ENCODE measurements at regions of chr2 and their contacts with region 1.

Region 1: GRCh38 chr2:176454893-176455811 is 185.9 kb downstream of the MTX2 start:
- DNase-seq: no peak
- ATAC-seq: peak; percentile 93
- H3K4me3 ChIP-seq: no peak overlapping the region
- H3K27ac ChIP-seq: no peak overlapping the region
- H3K4me1 ChIP-seq: no peaks in the 10 kb centered on the region
- H3K27me3 ChIP-seq: no peaks in the 10 kb centered on the region
- CTCF ChIP-seq: peak; percentile 75 to 84 (median 80)
- EP300 ChIP-seq: no peak; a peak in 1 of 4 replicates
- POLR2A ChIP-seq: no peak
- RAD21 ChIP-seq: peak; percentile 75

Region 2: DNA sequence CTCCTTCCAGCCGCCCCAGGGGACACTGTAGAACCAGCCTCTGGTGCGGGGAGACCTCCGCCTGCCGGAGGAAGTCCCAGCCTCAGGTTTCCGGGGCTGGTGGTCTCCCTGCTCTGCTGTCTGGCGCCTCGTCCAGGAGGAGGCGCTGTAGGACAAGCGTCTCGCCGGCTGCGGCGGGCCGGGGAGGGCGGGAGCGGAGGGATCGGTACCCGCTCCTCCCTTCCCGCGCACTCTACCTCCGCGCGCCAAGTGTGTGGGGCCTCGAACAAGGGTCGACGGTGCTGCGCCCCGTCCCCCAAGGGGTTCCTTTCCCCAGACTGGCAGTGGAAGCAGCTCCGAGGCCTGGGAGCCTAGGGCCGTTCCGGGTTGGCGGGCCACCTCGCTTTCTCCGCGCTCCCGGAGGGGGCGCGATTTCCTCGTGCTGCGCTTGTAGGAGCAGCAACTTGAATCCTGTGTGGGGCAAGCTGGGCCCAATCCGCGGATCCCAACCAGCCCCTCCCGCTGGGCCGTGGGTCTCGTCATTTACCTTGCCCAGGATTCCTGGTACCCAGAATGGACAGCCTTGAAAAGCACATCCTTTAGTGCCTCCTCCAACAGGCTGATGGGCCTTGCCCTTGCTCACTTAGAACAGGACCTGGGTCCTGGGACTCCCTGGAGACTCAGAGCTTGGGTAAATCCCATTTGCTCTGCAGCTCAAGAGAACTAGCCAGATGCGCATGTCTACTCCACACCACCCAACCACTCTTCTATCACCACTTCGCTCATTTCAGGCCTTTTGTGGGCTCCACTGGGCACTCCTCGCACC is 314.4 kb before region 1 on chr2:
- CTCF ChIA-PET with region 1: interaction called, 157 read pairs
- POLR2A ChIA-PET with region 1: no interaction called
- RAD21 ChIA-PET with region 1: interaction called, 76 read pairs
- SMC1A ChIA-PET with region 1: interaction called, 47 read pairs
- in situ Hi-C with region 1: loop called (anchors 5 kb)
- intact Hi-C with region 1: loop called (anchors 1 kb)
- DNase-seq: peak; percentile 24
- ATAC-seq: peak; percentile 99
- H3K4me3 ChIP-seq: peak overlapping the region; percentile 37; the same call in 1 of the 2 replicates
- H3K27ac ChIP-seq: no peak overlapping the region
- H3K4me1 ChIP-seq: no peaks in the 10 kb centered on the region
- H3K27me3 ChIP-seq: peaks cover 0 to 11% of the 10 kb centered on the region in 2 experiments
- CTCF ChIP-seq: peak; percentile 75 to 93 (median 92)
- EP300 ChIP-seq: no peak
- POLR2A ChIP-seq: no peak; the same call in 1 of the 2 replicates
- RAD21 ChIP-seq: peak; percentile 95

Region 3: GRCh38 chr2:176473177-176473576 is 18.0 kb after region 1 on chr2:
- CTCF ChIA-PET with region 1: interaction called, 29 read pairs
- POLR2A ChIA-PET with region 1: interaction called, 3 read pairs
- RAD21 ChIA-PET with region 1: interaction called, 8 read pairs
- SMC1A ChIA-PET with region 1: interaction called, 12 read pairs
- in situ Hi-C with region 1: no loop called
- intact Hi-C with region 1: no loop called
- DNase-seq: no peak
- ATAC-seq: peak; percentile 90
- H3K4me3 ChIP-seq: no peak overlapping the region
- H3K27ac ChIP-seq: no peak overlapping the region
- H3K4me1 ChIP-seq: no peaks in the 10 kb centered on the region; the same call in 1 of the 2 replicates
- H3K27me3 ChIP-seq: no peaks in the 10 kb centered on the region
- CTCF ChIP-seq: no peak
- EP300 ChIP-seq: no peak
- POLR2A ChIP-seq: no peak
- RAD21 ChIP-seq: no peak

Region 4: GRCh38 chr2:176500901-176501300 is 45.7 kb after region 1 on chr2:
- CTCF ChIA-PET with region 1: interaction called, 15 read pairs
- POLR2A ChIA-PET with region 1: no interaction called
- RAD21 ChIA-PET with region 1: interaction called, 11 read pairs
- SMC1A ChIA-PET with region 1: interaction called, 4 read pairs
- in situ Hi-C with region 1: no loop called
- intact Hi-C with region 1: no loop called
- DNase-seq: no peak
- ATAC-seq: no peak
- H3K4me3 ChIP-seq: no peak overlapping the region
- H3K27ac ChIP-seq: no peak overlapping the region
- H3K4me1 ChIP-seq: no peaks in the 10 kb centered on the region
- H3K27me3 ChIP-seq: no peaks in the 10 kb centered on the region; a peak in 1 of 4 replicates
- CTCF ChIP-seq: no peak
- EP300 ChIP-seq: no peak
- POLR2A ChIP-seq: no peak
- RAD21 ChIP-seq: no peak

Region 5: GRCh38 chr2:176638167-176639015 is 183.2 kb after region 1 on chr2:
- CTCF ChIA-PET with region 1: interaction called, 16 read pairs
- POLR2A ChIA-PET with region 1: no interaction called
- RAD21 ChIA-PET with region 1: interaction called, 6 read pairs
- SMC1A ChIA-PET with region 1: interaction called, 10 read pairs
- in situ Hi-C with region 1: no loop called
- intact Hi-C with region 1: loop called (anchors 2 kb)
- DNase-seq: no peak
- ATAC-seq: peak; percentile 93
- H3K4me3 ChIP-seq: peak overlapping the region; percentile 64
- H3K27ac ChIP-seq: no peak overlapping the region
- H3K4me1 ChIP-seq: no peaks in the 10 kb centered on the region
- H3K27me3 ChIP-seq: peaks cover 2 to 8% of the 10 kb centered on the region in 2 experiments
- CTCF ChIP-seq: peak; percentile 68 to 74 (median 70)
- EP300 ChIP-seq: no peak
- POLR2A ChIP-seq: no peak
- RAD21 ChIP-seq: peak; percentile 73

Region 6: DNA sequence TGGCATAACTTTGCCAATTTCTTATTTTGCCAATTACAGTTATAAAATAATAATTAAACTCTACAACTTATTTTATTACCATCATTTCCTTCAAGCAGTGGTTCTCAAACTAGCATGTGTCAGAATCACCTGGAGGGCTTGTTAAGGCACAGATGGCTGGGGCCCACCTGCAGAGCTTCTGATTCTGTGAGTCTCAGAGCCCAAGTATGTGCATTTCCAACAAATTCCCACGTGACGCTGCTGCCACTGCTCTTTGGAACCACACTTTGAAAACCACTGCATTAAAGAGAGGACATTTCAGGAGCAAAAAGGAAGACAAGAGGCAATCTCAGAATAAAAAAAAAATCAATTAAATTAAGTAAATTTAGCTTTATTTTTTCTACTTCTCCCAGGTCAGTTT is 663.5 kb after region 1 on chr2:
- CTCF ChIA-PET with region 1: no interaction called
- POLR2A ChIA-PET with region 1: no interaction called
- RAD21 ChIA-PET with region 1: no interaction called
- SMC1A ChIA-PET with region 1: no interaction called
- in situ Hi-C with region 1: no loop called
- intact Hi-C with region 1: no loop called
- DNase-seq: no peak
- ATAC-seq: no peak
- H3K4me3 ChIP-seq: no peak overlapping the region
- H3K27ac ChIP-seq: no peak overlapping the region
- H3K4me1 ChIP-seq: no peaks in the 10 kb centered on the region
- H3K27me3 ChIP-seq: no peaks in the 10 kb centered on the region; a peak in 1 of 4 replicates
- CTCF ChIP-seq: no peak
- EP300 ChIP-seq: no peak
- POLR2A ChIP-seq: no peak
- RAD21 ChIP-seq: no peak

Region 7: DNA sequence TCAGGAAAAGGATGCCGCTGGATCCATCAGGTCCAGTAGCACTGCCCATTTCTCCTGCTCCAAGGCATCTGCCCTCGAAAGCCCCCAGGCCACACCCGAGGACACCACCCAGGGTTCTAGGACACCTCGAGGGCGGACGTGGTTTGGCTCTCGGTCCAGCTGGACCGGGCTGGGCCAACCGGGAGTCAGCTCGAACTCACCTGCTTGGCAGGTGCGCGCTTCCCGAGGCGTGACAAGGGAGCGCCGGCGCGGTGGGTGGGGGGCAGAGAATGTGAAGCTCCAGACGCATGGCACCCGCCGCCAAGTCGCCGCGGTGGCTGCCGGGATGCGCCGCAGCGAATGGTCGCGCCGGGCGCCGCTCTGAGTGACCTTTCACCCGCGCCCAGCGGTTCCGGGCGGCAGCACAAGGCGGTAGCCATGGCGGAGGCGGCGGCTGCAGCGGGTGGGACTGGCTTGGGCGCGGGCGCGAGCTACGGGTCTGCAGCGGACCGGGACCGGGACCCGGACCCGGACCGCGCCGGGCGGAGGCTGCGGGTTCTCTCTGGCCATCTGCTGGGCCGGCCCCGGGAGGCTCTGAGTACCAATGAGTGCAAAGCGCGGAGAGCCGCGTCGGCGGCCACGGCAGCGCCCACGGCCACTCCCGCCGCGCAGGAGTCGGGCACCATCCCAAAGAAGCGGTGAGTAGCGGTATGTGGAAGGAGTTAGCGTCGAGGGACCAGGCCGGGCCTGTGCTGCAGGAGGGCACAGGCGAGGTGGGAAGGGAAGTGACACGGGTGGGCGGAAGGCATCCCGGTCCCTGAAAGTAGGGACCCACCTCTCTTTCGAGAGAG is 937.4 kb after region 1 on chr2 and contains the start of gene AGPS:
- CTCF ChIA-PET with region 1: no interaction called
- POLR2A ChIA-PET with region 1: no interaction called
- RAD21 ChIA-PET with region 1: no interaction called
- SMC1A ChIA-PET with region 1: no interaction called
- in situ Hi-C with region 1: no loop called
- intact Hi-C with region 1: no loop called
- DNase-seq: peak; percentile 30
- ATAC-seq: peak; percentile 92
- H3K4me3 ChIP-seq: peak within 1 kb of the TSS; percentile 91
- H3K27ac ChIP-seq: peak within 1 kb of the TSS; percentile 66
- H3K4me1 ChIP-seq: peaks cover 20% of the 10 kb centered on the region
- H3K27me3 ChIP-seq: no peaks in the 10 kb centered on the region
- CTCF ChIP-seq: no peak
- EP300 ChIP-seq: no peak
- POLR2A ChIP-seq: peak; percentile 94
- RAD21 ChIP-seq: no peak
- polyA plus RNA-seq, gene AGPS: 7.9 to 11.1 TPM